ENCODE measurements at regions of chr11 and their contacts with region 1.

Region 1: GRCh38 chr11:117098269-117099232 is at the start of gene SIK3:
- DNase-seq: peak; percentile 98
- H3K4me3 Mint-ChIP-seq: peak within 1 kb of the TSS; percentile 98
- H3K27ac Mint-ChIP-seq: peak within 1 kb of the TSS; percentile 98
- H3K4me1 Mint-ChIP-seq: peaks cover 42% of the 10 kb centered on the region
- H3K27me3 Mint-ChIP-seq: peaks cover 2% of the 10 kb centered on the region
- total RNA-seq, gene SIK3: 38.4 and 38.7 TPM in 2 replicates

Region 2: DNA sequence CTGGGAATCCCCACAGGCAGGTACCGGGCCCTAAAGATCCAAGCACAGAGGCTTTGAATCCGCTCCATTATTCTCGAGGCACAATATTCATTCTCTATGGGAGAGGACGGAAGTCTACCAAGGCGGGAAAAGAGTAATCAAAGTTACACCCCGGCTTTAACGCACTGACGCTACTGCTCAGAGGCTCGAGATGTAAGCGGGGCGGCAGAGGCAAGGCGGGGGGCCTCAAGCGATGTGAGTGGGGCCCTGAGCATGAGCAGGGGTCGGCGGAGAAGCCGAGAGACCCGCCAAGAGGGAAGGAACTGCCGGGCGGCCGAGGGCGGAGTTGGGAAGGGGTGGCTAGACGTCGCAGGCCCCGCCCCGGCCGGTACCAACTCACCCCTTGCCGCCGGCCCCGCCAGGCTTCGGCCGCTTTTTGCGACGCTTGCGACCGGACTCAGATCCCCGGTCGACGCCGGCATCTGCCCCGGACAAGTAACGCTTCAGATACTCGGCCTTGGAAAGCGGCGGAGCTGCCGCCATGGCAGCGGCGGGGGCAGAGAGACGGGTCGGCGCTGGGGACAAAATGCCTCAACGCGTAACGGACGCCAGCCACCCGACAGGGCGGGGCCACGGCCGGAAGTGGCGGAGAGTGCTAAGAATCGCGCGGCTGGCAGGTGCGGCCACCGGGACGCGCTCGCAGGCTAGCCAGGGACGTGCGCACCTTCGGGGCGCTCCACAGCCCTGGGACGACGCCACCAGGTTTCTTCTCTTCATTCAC is 325.9 kb before region 1 on chr11 and contains the start of gene BUD13:
- intact Hi-C with region 1: loop called (anchors 5 kb)
- DNase-seq: peak; percentile 99
- H3K4me3 Mint-ChIP-seq: peak within 1 kb of the TSS; percentile 91
- H3K27ac Mint-ChIP-seq: peak within 1 kb of the TSS; percentile 95
- H3K4me1 Mint-ChIP-seq: peaks cover 46% of the 10 kb centered on the region
- H3K27me3 Mint-ChIP-seq: no peaks in the 10 kb centered on the region
- total RNA-seq, gene BUD13: 31.5 and 33.2 TPM in 2 replicates

Region 3: DNA sequence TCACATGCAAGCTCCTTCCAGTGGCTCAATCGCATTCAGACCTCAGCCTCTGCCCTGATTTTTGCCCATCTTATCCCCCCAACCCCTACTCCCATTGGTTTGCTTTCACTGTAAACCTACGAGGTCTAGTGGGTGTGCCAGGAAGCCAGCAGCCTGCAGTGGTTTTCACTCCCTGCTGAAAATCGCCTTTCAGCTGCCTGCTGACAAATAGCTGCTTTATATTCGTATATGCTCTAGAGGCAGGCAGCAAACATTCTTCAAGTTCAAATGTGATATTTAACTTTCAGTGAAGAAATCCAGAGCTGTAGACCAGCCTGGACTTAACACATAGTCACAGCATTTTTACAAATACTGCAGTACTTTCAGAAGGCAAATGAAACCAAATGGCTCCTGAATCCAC is 168.4 kb before region 1 on chr11:
- intact Hi-C with region 1: loop called (anchors 1 kb)
- DNase-seq: peak; percentile 86
- H3K4me3 Mint-ChIP-seq: peak overlapping the region; percentile 88
- H3K27ac Mint-ChIP-seq: peak overlapping the region; percentile 89
- H3K4me1 Mint-ChIP-seq: peaks cover 55% of the 10 kb centered on the region
- H3K27me3 Mint-ChIP-seq: no peaks in the 10 kb centered on the region

Region 4: DNA sequence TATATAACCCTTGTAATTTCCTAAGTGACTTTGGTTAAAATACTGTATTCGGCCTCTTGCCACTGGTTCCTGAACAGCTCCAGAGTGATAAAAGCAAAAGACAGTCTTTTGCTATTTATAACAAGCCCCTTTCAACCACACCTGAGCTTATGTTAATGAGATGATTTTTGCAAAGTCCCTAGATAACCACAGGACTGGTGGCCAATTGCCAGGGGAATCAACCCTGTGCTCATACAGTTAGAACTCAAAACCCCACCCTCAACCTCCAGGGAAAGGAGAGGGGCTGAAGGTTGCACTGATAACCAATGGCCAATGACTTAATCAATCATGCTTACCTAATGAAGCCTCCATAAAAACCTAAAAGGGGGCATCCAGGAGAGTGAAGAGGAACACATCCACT is 78.3 kb before region 1 on chr11:
- intact Hi-C with region 1: loop called (anchors 1 kb)
- DNase-seq: peak; percentile 56
- H3K4me3 Mint-ChIP-seq: peak overlapping the region; percentile 18
- H3K27ac Mint-ChIP-seq: peak overlapping the region; percentile 66
- H3K4me1 Mint-ChIP-seq: peaks cover 49% of the 10 kb centered on the region
- H3K27me3 Mint-ChIP-seq: no peaks in the 10 kb centered on the region

Measured in activated CD4-positive, alpha-beta T cell treated with anti-CD3 and anti-CD28 coated beads, Interleukin-2, amount 10 ng/mL, durations not matched to agents 24 days and 14 days (primary cell).